T-cell (primary cell): ENCODE measurements at regions of chr15 and their contacts with region 1.

Region 1: DNA sequence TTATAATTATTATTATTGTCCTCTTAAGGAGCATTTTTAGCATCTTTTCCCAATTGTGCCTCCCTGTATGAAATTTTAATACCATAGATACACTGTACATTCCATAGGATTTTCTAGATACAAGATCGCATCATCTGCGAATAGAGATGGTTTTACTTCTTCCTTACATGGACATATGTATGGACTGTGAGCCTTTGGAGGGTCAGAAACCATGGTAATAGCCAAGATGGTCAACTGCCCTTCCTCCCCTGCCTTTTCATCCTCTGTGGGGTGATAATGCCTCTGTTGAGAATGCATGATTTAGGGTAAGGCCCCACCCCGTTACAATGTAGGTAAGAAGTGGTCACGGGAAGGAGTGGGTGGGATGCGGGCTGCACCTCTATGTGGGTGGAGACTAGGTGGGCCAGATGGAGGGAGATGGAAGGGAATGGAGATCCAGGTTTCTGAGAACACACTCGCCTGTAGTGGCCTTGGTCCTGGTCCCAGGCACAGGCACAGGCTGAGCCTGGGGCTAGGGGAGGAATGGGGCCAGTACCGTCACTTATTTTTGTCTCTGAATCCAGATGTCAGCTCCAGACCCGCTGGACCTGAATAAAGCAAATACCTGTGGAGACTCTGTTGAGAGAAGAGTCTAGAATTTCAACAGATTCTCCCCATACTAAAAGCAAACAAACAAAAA is 31.7 kb downstream of the GOLGA6A start:
- DNase-seq: peak in 1 of 35 experiments; percentile 9
- ATAC-seq: no peak
- H3K4me3 ChIP-seq: no peak overlapping the region
- H3K4me3 Mint-ChIP-seq: no peak overlapping the region
- H3K27ac ChIP-seq: no peak overlapping the region
- H3K27ac Mint-ChIP-seq: no peak overlapping the region
- H3K4me1 ChIP-seq: peaks cover 9 to 20% of the 10 kb centered on the region in 2 experiments
- H3K4me1 Mint-ChIP-seq: peaks cover 23 to 34% (median 24%) of the 10 kb centered on the region in 3 donors
- H3K27me3 ChIP-seq: no peaks in the 10 kb centered on the region
- H3K27me3 Mint-ChIP-seq: no peaks in the 10 kb centered on the region

Region 2: GRCh38 chr15:73964736-73965093 is 86.0 kb before region 1 on chr15:
- CTCF ChIA-PET with region 1: interaction called, 4 to 12 read pairs
- POLR2A ChIA-PET with region 1: no interaction called
- DNase-seq: peak; percentile 61 to 93 (median 83)
- ATAC-seq: peak; percentile 83 to 90 (median 89)
- H3K4me3 ChIP-seq: peak overlapping the region; percentile 46 to 52
- H3K4me3 Mint-ChIP-seq: peak overlapping the region; percentile 70 to 80 (median 75)
- H3K27ac ChIP-seq: peak overlapping the region; percentile 57
- H3K27ac Mint-ChIP-seq: peak overlapping the region; percentile 72 to 88
- H3K4me1 ChIP-seq: peaks cover 21 to 36% of the 10 kb centered on the region in 2 experiments
- H3K4me1 Mint-ChIP-seq: peaks cover 28 to 36% (median 35%) of the 10 kb centered on the region in 3 donors
- H3K27me3 ChIP-seq: no peaks in the 10 kb centered on the region
- H3K27me3 Mint-ChIP-seq: no peaks in the 10 kb centered on the region

Region 3: DNA sequence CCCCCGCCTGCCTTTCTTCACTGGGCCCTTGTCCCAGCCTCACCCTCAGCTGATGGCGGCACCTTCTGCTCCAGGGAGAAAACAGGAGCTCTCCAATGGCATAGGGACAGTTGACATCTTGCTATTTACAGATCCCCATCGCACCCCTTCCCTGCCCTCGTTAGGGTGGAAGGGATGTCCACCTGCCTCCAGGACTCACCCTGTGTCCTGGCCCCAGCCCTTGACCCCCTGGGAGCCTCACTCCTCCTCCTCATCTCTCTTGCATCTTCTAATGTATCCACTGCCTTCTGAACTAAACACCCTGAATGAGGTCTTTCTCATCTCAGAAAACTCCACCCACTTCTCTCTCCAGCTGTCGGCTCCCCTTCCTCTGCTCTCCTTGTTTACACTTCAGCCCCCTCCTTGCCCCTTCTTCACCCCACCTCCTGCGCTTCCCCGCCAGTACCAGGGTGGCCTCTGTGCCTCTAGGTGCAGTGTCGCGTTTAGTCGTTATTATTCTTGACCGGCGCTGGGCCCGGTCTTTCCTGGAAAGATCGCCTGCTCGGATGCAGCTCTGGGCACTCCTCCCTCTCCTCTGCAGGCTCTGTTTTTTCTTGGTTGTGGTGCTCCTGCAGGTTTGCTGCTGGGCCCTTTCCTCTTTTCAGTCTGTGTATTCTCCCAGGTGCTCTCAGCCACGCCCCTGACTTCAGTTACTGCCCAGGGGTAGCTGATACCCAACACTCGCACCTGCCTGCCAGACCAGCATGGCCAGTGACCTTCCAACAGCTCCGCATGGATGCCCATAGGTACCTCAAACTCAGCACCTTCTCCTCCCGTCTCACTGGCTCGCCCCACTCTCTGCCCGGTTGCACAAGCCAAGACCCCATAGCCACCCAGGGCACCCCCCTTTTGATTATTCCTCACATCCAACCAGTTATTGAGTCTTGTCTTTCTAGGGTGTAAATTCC is 13.3 kb before region 1 on chr15:
- CTCF ChIA-PET with region 1: interaction called in 1 of 2 experiments, 5 read pairs
- POLR2A ChIA-PET with region 1: interaction called in 1 of 2 experiments, 11 read pairs
- DNase-seq: no peak
- ATAC-seq: no peak
- H3K4me3 ChIP-seq: no peak overlapping the region
- H3K4me3 Mint-ChIP-seq: no peak overlapping the region
- H3K27ac ChIP-seq: no peak overlapping the region
- H3K27ac Mint-ChIP-seq: no peak overlapping the region
- H3K4me1 ChIP-seq: no peaks in the 10 kb centered on the region
- H3K4me1 Mint-ChIP-seq: no peaks in the 10 kb centered on the region
- H3K27me3 ChIP-seq: no peaks in the 10 kb centered on the region
- H3K27me3 Mint-ChIP-seq: no peaks in the 10 kb centered on the region

Region 4: DNA sequence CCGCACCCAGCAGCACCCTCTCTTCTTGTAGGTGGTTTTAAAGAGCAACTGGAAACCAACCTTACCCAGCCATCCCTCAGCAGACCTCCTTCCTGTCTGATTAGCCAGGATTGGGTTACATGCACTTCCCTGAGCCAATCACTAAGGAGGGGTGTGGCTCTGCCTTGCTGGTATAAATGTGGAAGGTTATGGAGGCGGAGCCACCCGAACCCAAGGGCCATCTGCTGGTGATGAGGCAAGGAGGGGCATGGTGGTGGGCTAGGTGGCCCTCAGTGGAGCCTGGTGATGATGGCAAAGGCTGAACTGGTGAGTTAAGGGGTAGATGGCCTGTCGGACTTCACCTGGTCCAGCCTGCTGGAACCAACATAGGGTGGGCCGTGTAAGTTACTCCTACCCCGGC is 225.3 kb after region 1 on chr15:
- CTCF ChIA-PET with region 1: no interaction called
- POLR2A ChIA-PET with region 1: no interaction called
- DNase-seq: no peak
- ATAC-seq: no peak
- H3K4me3 ChIP-seq: no peak overlapping the region
- H3K4me3 Mint-ChIP-seq: no peak overlapping the region
- H3K27ac ChIP-seq: no peak overlapping the region
- H3K27ac Mint-ChIP-seq: no peak overlapping the region
- H3K4me1 ChIP-seq: no peaks in the 10 kb centered on the region
- H3K4me1 Mint-ChIP-seq: no peaks in the 10 kb centered on the region
- H3K27me3 ChIP-seq: peaks cover 0 to 63% of the 10 kb centered on the region in 2 experiments
- H3K27me3 Mint-ChIP-seq: peaks cover 25 to 39% of the 10 kb centered on the region in 2 donors

Region 5: GRCh38 chr15:74525946-74526345 is 475.3 kb after region 1 on chr15:
- CTCF ChIA-PET with region 1: no interaction called
- POLR2A ChIA-PET with region 1: no interaction called
- DNase-seq: no peak
- ATAC-seq: no peak
- H3K4me3 ChIP-seq: no peak overlapping the region
- H3K4me3 Mint-ChIP-seq: no peak overlapping the region
- H3K27ac ChIP-seq: no peak overlapping the region
- H3K27ac Mint-ChIP-seq: no peak overlapping the region
- H3K4me1 ChIP-seq: no peaks in the 10 kb centered on the region
- H3K4me1 Mint-ChIP-seq: no peaks in the 10 kb centered on the region
- H3K27me3 ChIP-seq: no peaks in the 10 kb centered on the region
- H3K27me3 Mint-ChIP-seq: no peaks in the 10 kb centered on the region